Heart right ventricle (tissue), 16 donors: ENCODE measurements at regions of chr17 and their contacts with region 1.

Region 1: DNA sequence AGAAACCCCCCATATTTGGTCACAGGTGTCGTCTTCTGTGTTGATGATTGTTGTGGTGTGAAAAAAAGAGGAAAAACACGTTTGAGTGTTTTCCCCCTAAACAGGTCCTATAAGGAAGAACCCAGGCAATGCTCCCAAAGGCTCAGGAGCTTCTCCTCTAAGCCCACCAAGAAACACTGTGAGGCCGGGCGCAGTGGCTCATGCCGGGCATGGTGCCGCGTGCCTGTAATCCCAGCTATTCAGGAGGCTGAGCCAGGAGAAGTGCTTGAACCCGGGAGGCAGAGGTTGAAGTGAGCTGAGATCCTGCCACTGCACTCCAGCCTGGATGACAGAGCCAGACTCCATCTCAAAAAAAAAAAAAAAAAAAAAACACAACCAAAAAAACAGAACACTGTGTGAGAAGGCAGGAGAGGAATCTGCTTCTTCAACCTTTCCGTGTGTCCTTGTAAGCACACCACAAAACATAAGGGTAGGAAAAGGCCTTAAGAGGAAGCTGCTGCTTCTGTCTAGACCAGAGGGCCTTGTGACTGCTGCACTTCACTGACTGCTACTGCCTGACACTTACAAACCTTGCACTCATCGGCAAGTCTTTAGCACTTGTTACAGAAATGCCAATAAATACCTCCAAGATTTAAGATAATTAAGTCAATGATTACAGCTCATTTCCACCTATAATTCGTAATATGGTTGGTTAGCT is 9.3 kb downstream of the JPT1 start:
- DNase-seq: no peak
- ATAC-seq: no peak
- H3K4me3 ChIP-seq: no peak overlapping the region
- H3K27ac ChIP-seq: no peak overlapping the region
- H3K4me1 ChIP-seq: peaks cover 0 to 33% (median 0%) of the 10 kb centered on the region in 9 donors
- H3K27me3 ChIP-seq: no peaks in the 10 kb centered on the region
- CTCF ChIP-seq: no peak

Region 2: GRCh38 chr17:75128694-75129505 is 16.1 kb before region 1 on chr17:
- intact Hi-C with region 1: loop called in 1 of 10 experiments (anchors 1 kb)
- DNase-seq: no peak
- ATAC-seq: no peak
- H3K4me3 ChIP-seq: no peak overlapping the region
- H3K27ac ChIP-seq: no peak overlapping the region
- H3K4me1 ChIP-seq: peaks cover 0 to 42% (median 26%) of the 10 kb centered on the region in 9 donors
- H3K27me3 ChIP-seq: no peaks in the 10 kb centered on the region
- CTCF ChIP-seq: no peak